ENCODE measurements at regions of chr11 and their contacts with region 1.

Region 1: GRCh38 chr11:125553357-125553756 is 15.9 kb upstream of the EI24 start:
- DNase-seq: no peak
- ATAC-seq: no peak
- H3K4me3 ChIP-seq: no peak overlapping the region
- H3K27ac ChIP-seq: no peak overlapping the region
- H3K4me1 ChIP-seq: no peaks in the 10 kb centered on the region
- H3K27me3 ChIP-seq: peaks cover 5% of the 10 kb centered on the region; the same call in 1 of the 2 replicates
- CTCF ChIP-seq: no peak

Region 2: GRCh38 chr11:125504580-125504979 is 48.8 kb before region 1 on chr11:
- CTCF ChIA-PET with region 1: interaction called, 3 read pairs
- POLR2A ChIA-PET with region 1: no interaction called
- in situ Hi-C with region 1: no loop called
- intact Hi-C with region 1: loop called (anchors 5 kb)
- DNase-seq: no peak
- ATAC-seq: no peak
- H3K4me3 ChIP-seq: no peak overlapping the region
- H3K27ac ChIP-seq: no peak overlapping the region
- H3K4me1 ChIP-seq: no peaks in the 10 kb centered on the region
- H3K27me3 ChIP-seq: peaks cover 12% of the 10 kb centered on the region
- CTCF ChIP-seq: no peak

Measured in Panc1 (cell line).